Right cardiac atrium (tissue), 5 donors: ENCODE measurements at regions of chr1 and their contacts with region 1.

Region 1: GRCh38 chr1:150572918-150573647 is 6.3 kb downstream of the MCL1 start:
- DNase-seq: no peak
- ATAC-seq: no peak
- H3K4me3 ChIP-seq: no peak overlapping the region
- H3K27ac ChIP-seq: peak overlapping the region; percentile 48
- H3K4me1 ChIP-seq: peaks cover 26% of the 10 kb centered on the region
- H3K27me3 ChIP-seq: no peaks in the 10 kb centered on the region

Region 2: DNA sequence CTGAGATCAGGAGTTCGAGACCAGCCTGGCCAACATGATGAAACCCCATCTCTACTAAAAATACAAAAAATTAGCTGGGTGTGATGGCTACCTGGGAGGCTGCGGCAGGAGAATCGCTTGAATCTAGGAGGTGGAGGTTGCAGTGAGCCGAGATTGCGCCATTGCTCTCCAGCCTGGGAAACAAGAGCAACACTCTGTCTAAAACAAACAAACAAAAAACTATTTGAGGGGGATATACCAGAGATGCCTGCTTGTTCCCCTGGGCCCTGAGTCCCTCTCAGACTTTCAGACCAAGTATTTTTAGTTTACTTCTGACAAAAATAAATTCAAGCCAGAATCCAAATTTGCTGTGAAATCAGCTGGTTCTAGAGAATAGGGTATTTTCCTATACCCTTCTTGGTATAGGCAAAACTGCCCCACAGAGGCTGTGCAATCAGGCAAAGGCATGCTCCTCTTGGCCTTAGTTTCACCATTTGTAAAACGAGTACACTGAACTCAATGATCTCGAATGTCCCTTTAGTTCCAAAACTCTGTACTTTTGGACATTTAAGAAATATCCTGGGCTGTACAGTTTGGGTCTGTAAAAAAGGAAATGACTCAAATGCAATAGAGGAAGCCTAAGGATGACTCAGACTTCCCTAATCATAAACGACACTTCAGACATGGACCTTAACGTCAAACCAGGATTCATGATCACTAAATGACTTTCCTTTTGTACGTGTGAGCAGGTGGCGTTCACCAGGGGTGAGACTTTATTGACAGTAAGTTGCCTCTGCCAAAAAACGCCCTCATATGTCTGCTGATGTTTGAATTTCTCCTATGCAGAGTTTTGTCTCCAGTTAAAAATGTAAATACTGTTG is 40.2 kb after region 1 on chr1:
- intact Hi-C with region 1: loop called in 1 of 4 experiments (anchors 5 kb)
- DNase-seq: no peak
- ATAC-seq: peak; percentile 70 to 77
- H3K4me3 ChIP-seq: peak overlapping the region; percentile 29
- H3K27ac ChIP-seq: peak overlapping the region; percentile 89
- H3K4me1 ChIP-seq: peaks cover 10% of the 10 kb centered on the region
- H3K27me3 ChIP-seq: no peaks in the 10 kb centered on the region